CD4-positive, alpha-beta T cell (primary cell): ENCODE measurements at regions of chr2 and their contacts with region 1.

Region 1: GRCh38 chr2:54606393-54606969 is 117.0 kb upstream of the EML6 start:
- DNase-seq: peak in 13 of 14 experiments; percentile 21 to 69 (median 44)
- ATAC-seq: peak; percentile 97
- H3K4me3 ChIP-seq: no peak overlapping the region
- H3K4me3 Mint-ChIP-seq: peak overlapping the region; percentile 77
- H3K27ac ChIP-seq: no peak overlapping the region
- H3K27ac Mint-ChIP-seq: peak overlapping the region; percentile 96
- H3K4me1 ChIP-seq: peaks cover 63% of the 10 kb centered on the region
- H3K4me1 Mint-ChIP-seq: peaks cover 90% of the 10 kb centered on the region
- H3K27me3 ChIP-seq: no peaks in the 10 kb centered on the region
- H3K27me3 Mint-ChIP-seq: no peaks in the 10 kb centered on the region
- CTCF ChIP-seq: no peak

Region 2: GRCh38 chr2:54570925-54571694 is 35.4 kb before region 1 on chr2:
- CTCF ChIA-PET with region 1: interaction called, 5 read pairs
- POLR2A ChIA-PET with region 1: interaction called, 16 read pairs
- intact Hi-C with region 1: loop called in 1 of 2 experiments (anchors 1 kb)
- DNase-seq: peak in 12 of 14 experiments; percentile 39 to 87 (median 64)
- ATAC-seq: peak; percentile 14
- H3K4me3 ChIP-seq: peak overlapping the region; percentile 31
- H3K4me3 Mint-ChIP-seq: peak overlapping the region; percentile 81
- H3K27ac ChIP-seq: peak overlapping the region; percentile 89 to 98
- H3K27ac Mint-ChIP-seq: peak overlapping the region; percentile 96
- H3K4me1 ChIP-seq: peaks cover 90% of the 10 kb centered on the region
- H3K4me1 Mint-ChIP-seq: peaks cover 95% of the 10 kb centered on the region
- H3K27me3 ChIP-seq: no peaks in the 10 kb centered on the region
- H3K27me3 Mint-ChIP-seq: no peaks in the 10 kb centered on the region
- CTCF ChIP-seq: no peak

Region 3: DNA sequence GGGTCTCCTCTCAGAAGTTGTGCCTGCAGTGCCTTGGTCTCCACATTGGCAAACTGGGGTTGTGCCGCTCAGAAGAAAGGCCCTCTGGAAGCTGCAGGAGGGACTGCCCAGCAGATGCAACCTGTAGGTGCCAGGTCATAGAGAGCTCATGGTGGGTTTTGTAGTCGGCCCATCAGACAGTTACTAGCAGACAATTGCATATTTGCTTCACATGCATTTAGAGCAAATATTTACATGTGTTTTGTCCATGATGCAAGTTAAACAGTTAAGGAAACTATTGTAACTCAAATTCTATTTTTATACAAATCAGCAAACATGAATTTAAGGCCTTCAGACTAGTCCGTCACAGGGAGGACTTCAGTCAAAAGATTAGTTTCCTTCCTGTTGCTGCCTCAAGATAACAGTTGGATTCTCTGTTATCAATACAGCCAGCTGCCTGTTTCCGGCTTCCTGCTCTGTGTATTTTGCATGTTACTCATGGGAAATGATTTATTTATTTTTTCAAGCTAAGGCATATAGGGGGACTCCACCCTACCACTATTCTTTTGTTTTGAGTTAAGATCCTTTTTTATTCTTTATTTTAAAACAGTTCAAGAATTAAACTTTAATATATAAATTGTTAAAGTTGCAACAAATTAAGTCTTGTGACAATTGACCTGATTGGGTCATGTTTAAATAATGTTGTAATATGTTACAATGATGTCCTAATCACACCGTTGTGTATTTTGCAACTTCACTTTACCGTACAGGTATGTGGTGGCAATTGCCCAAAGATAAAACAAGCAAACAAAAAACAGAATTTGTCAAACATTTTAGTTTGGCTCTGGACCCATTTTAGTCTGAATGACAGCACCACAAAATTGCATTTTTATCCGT is 16.9 kb before region 1 on chr2:
- CTCF ChIA-PET with region 1: interaction called, 3 read pairs
- POLR2A ChIA-PET with region 1: interaction called, 14 read pairs
- intact Hi-C with region 1: loop called in 1 of 2 experiments (anchors 2 kb)
- DNase-seq: peak in 8 of 14 experiments; percentile 40 to 81 (median 54)
- ATAC-seq: peak; percentile 61
- H3K4me3 ChIP-seq: peak overlapping the region; percentile 27
- H3K4me3 Mint-ChIP-seq: peak overlapping the region; percentile 74
- H3K27ac ChIP-seq: peak overlapping the region; percentile 74 to 80
- H3K27ac Mint-ChIP-seq: peak overlapping the region; percentile 96
- H3K4me1 ChIP-seq: peaks cover 61% of the 10 kb centered on the region
- H3K4me1 Mint-ChIP-seq: peaks cover 98% of the 10 kb centered on the region
- H3K27me3 ChIP-seq: no peaks in the 10 kb centered on the region
- H3K27me3 Mint-ChIP-seq: no peaks in the 10 kb centered on the region
- CTCF ChIP-seq: no peak

Region 4: GRCh38 chr2:54618646-54619565 is 12.4 kb after region 1 on chr2:
- CTCF ChIA-PET with region 1: no interaction called
- POLR2A ChIA-PET with region 1: interaction called, 8 read pairs
- intact Hi-C with region 1: loop called in 1 of 2 experiments (anchors 2 kb)
- DNase-seq: peak in 1 of 14 experiments; percentile 29
- ATAC-seq: no peak
- H3K4me3 ChIP-seq: no peak overlapping the region
- H3K4me3 Mint-ChIP-seq: peak overlapping the region; percentile 6
- H3K27ac ChIP-seq: no peak overlapping the region
- H3K27ac Mint-ChIP-seq: peak overlapping the region; percentile 68
- H3K4me1 ChIP-seq: peaks cover 7% of the 10 kb centered on the region
- H3K4me1 Mint-ChIP-seq: peaks cover 50% of the 10 kb centered on the region
- H3K27me3 ChIP-seq: no peaks in the 10 kb centered on the region
- H3K27me3 Mint-ChIP-seq: no peaks in the 10 kb centered on the region
- CTCF ChIP-seq: no peak

Region 5: GRCh38 chr2:54755641-54756326 is 149.3 kb after region 1 on chr2:
- CTCF ChIA-PET with region 1: no interaction called
- POLR2A ChIA-PET with region 1: no interaction called
- intact Hi-C with region 1: no loop called
- DNase-seq: no peak
- ATAC-seq: no peak
- H3K4me3 ChIP-seq: no peak overlapping the region
- H3K4me3 Mint-ChIP-seq: no peak overlapping the region
- H3K27ac ChIP-seq: no peak overlapping the region
- H3K27ac Mint-ChIP-seq: no peak overlapping the region
- H3K4me1 ChIP-seq: no peaks in the 10 kb centered on the region
- H3K4me1 Mint-ChIP-seq: no peaks in the 10 kb centered on the region
- H3K27me3 ChIP-seq: no peaks in the 10 kb centered on the region
- H3K27me3 Mint-ChIP-seq: no peaks in the 10 kb centered on the region
- CTCF ChIP-seq: no peak